Cardiac septum (tissue), 1 donor: ENCODE measurements at regions of chr13 and their contacts with region 1.

Region 1: DNA sequence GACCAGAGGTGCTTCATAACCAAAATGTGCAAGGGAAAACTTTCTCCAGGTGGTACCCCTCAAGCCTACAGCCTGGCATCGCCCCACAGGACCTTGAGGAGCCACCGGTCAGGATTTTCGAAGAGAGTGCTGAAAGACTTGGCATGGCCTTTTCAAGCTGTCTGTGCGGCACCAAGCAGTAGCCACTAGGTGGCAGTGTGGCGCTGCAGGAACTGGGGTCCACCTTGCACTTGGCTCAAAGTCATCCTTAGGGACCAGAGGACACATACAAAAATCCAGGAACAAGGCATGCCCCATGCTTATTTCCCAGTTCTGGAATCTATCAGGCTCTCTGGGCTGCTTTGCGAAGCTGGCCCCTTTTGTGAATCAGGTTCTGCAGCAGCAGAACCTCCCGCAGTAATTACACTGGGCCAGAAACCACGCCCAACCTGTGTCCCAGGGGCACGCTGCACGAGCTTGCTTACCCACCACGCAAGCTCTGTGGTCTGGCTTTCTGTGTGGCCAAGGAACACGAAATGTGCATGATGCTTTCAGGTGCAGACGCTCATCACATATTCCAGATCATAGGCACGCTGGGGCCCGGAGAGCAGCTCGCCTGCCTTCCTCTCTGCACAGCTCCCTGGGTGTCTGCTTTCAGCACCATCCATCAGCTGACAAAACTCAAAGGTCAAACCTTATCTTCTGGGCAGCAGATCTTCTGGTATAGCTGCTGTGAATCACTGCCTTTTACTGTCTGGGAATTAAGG is 87.2 kb downstream of the SLC7A1 start:
- DNase-seq: peak; percentile 87

Region 2: DNA sequence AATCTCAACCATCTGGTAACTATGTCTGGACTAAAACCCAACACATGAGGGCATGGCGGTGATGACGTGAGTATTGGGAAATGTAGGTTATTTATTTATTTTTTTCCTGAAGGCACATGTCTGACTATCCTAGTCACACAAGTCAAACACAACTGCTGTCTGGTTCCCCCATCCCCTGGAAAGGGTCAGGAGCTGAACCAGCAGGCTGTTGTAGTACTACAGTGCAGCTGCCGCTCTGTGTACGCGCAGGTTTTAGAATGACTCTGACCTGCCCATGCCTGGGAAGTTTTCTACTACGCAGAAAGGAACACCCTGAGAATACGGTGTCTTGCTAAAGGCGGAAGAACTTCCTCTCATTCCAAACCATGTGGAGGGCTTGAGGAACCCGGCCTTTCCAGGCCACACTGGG is 86.0 kb after region 1 on chr13:
- intact Hi-C with region 1: loop called (anchors 1 kb)
- DNase-seq: no peak

Region 3: DNA sequence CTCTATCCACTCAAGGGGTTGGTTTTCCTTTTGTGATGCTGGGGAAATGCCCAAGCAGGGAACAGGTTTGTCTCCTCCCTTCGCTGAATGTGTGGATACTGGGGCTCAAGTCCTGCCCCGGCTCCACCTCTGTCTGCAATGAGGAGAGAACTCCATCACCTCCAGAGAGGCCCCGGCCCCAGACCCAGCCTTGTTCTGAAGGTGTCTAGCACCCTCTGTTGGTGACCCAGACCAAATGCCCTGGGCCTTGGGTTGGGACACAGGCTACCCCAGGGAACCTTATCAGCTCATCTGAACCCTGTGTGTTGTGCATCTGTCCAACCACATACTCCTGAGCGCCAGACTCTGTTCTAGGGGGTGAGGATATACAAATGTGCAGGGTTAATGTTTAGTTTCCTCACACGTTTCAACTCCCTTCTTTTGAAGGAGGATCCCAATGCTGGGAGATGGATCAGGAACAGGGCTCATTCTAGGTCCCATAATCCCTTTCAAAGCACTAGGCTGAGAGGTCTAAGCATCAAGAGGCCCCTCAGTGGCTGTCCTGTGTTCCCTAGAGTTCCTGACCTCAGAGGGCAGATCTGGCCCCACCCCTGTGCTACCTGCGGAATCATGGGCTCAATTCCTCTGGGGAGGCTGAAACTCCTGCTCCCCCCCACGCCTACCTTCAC is 199.7 kb after region 1 on chr13:
- intact Hi-C with region 1: loop called (anchors 2 kb)
- DNase-seq: no peak

Region 4: DNA sequence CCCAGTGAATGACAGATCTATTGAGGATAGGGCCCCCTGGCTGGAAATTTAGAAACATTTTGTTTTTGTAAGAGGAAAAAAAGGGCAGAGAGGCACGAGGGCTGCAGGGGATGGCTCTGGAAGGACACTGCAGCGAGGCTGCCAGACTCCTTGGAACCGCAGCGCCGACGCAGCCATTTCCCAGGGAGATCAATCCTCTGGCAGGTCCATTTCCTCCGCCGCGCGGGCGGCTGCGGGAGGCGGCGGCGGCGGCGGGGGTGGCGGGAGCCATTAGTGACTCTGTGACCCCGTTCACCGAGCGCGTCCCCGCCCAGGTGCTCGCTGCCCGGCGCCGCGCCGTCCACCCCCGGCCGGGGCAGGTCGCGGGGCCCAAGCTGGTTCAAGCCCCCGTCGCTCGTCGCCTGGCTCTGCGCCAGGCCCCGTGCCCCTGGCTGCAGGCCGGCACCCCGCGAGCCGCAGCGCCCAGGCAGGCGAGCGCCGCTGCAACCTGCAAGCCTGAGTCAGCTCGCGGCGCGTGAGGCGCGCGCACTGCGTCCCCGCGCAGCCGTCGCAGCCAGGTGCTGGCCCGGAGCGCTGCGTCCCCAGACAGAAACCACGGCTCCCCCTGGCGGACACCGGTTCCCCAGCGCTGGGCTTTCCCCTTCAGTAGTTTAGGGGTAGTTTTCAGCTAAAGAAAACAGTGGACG is 606.4 kb after region 1 on chr13:
- intact Hi-C with region 1: loop called (anchors 2 kb)
- DNase-seq: peak; percentile 94